ENCODE measurements at regions of chr1 and their contacts with region 1.

Region 1: GRCh38 chr1:207868774-207869721 is 41.9 kb downstream of the CD34 start:
- DNase-seq: peak; percentile 62
- ATAC-seq: peak; percentile 92
- H3K4me3 ChIP-seq: peak overlapping the region; percentile 59
- H3K27ac ChIP-seq: no peak overlapping the region
- H3K4me1 ChIP-seq: peaks cover 12% of the 10 kb centered on the region
- H3K27me3 ChIP-seq: peaks cover 4% of the 10 kb centered on the region
- CTCF ChIP-seq: peak; percentile 96
- POLR2A ChIP-seq: no peak
- RAD21 ChIP-seq: peak; percentile 64

Region 2: GRCh38 chr1:207828485-207829158 is 40.4 kb before region 1 on chr1:
- CTCF ChIA-PET with region 1: interaction called, 30 read pairs
- POLR2A ChIA-PET with region 1: no interaction called
- dilution Hi-C with region 1: no loop called
- in situ Hi-C with region 1: loop called (anchors 5 kb)
- intact Hi-C with region 1: loop called (anchors 1 kb)
- DNase-seq: peak; percentile 82
- ATAC-seq: peak; percentile 64
- H3K4me3 ChIP-seq: no peak overlapping the region
- H3K27ac ChIP-seq: no peak overlapping the region
- H3K4me1 ChIP-seq: peaks cover 26% of the 10 kb centered on the region
- H3K27me3 ChIP-seq: no peaks in the 10 kb centered on the region
- CTCF ChIP-seq: peak; percentile 85
- POLR2A ChIP-seq: 0 out of 2 replicates have a peak, but pooled peaks have one; percentile 31
- RAD21 ChIP-seq: peak; percentile 85

Region 3: DNA sequence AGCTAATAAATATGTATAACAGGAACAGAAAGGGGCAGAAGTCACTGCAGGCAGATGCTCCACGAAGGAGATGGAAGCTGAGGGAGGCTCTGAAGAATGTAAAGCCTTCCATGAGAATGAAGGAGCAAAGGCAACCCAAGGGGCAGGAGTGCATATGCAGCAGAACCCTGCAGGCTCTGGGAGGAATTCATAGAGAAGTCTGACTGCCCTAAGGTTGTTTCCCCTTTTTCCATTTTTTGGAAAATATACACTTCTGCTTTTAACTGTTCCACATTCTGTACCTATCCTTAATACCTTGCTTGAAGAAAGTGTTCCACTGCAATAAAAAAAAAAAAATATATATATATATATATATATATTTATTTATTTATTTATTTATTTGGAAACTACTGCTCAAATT is 27.8 kb before region 1 on chr1:
- CTCF ChIA-PET with region 1: interaction called, 11 read pairs
- POLR2A ChIA-PET with region 1: no interaction called
- dilution Hi-C with region 1: no loop called
- in situ Hi-C with region 1: no loop called
- intact Hi-C with region 1: no loop called
- DNase-seq: no peak
- ATAC-seq: no peak
- H3K4me3 ChIP-seq: no peak overlapping the region
- H3K27ac ChIP-seq: no peak overlapping the region
- H3K4me1 ChIP-seq: no peaks in the 10 kb centered on the region; the same call in 1 of the 2 replicates
- H3K27me3 ChIP-seq: no peaks in the 10 kb centered on the region
- CTCF ChIP-seq: no peak
- POLR2A ChIP-seq: no peak
- RAD21 ChIP-seq: no peak

Region 4: GRCh38 chr1:207852576-207853371 is 16.3 kb before region 1 on chr1:
- CTCF ChIA-PET with region 1: no interaction called
- POLR2A ChIA-PET with region 1: no interaction called
- dilution Hi-C with region 1: no loop called
- in situ Hi-C with region 1: no loop called
- intact Hi-C with region 1: no loop called
- DNase-seq: no peak
- ATAC-seq: 0 out of 2 replicates have a peak, but pooled peaks have one; percentile 11
- H3K4me3 ChIP-seq: no peak overlapping the region
- H3K27ac ChIP-seq: no peak overlapping the region
- H3K4me1 ChIP-seq: no peaks in the 10 kb centered on the region
- H3K27me3 ChIP-seq: no peaks in the 10 kb centered on the region
- CTCF ChIP-seq: no peak
- POLR2A ChIP-seq: no peak
- RAD21 ChIP-seq: no peak